ENCODE measurements at regions of chr11 and their contacts with region 1.

Region 1: DNA sequence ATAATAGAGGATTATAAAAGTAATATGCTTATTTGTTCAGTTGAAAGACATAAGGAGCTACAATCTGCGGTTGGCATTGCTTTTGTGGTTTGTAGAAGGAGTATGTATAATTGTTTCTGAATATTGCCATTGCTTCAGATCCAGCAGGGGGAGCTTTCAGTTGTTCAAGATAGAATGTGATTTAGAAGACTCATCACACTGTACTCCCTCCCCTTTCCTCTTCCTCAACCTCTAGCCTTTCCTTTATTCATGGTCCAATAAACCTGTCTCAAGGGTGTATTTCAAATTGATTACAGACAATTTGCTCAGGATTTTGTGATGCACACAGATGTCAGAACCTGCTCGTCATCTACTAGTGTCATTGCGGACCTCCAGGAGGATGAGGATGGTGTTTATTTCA is 9.8 kb downstream of the PRMT3 start:
- DNase-seq: peak; percentile 34
- ATAC-seq: peak; percentile 83
- H3K4me3 Mint-ChIP-seq: no peak overlapping the region
- H3K27ac Mint-ChIP-seq: peak overlapping the region; percentile 5
- H3K4me1 Mint-ChIP-seq: peaks cover 8% of the 10 kb centered on the region
- H3K27me3 Mint-ChIP-seq: no peaks in the 10 kb centered on the region

Region 2: DNA sequence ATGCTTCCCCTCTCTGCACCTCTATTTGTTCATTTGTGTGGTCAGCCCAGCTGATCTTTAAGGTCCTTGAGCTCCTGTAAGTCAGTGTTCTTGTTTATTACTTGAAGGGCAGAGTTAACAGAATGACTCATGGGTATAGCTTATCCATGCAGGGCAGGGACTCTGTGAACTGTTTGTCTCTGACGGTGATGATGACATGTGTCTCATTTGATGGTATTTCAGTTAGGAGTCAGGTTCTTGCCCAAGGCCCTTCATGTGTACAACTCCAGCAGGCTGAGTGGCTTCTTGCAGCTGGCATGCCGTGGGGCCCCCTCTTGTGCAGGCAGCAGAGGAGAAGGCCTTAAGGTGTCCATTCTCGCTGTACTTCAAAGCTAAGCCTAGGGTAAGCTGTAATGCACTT is 402.1 kb before region 1 on chr11:
- CTCF ChIA-PET with region 1: no interaction called
- POLR2A ChIA-PET with region 1: no interaction called
- intact Hi-C with region 1: no loop called
- DNase-seq: no peak
- ATAC-seq: no peak
- H3K4me3 Mint-ChIP-seq: no peak overlapping the region
- H3K27ac Mint-ChIP-seq: no peak overlapping the region
- H3K4me1 Mint-ChIP-seq: no peaks in the 10 kb centered on the region
- H3K27me3 Mint-ChIP-seq: peaks cover 3% of the 10 kb centered on the region

Region 3: DNA sequence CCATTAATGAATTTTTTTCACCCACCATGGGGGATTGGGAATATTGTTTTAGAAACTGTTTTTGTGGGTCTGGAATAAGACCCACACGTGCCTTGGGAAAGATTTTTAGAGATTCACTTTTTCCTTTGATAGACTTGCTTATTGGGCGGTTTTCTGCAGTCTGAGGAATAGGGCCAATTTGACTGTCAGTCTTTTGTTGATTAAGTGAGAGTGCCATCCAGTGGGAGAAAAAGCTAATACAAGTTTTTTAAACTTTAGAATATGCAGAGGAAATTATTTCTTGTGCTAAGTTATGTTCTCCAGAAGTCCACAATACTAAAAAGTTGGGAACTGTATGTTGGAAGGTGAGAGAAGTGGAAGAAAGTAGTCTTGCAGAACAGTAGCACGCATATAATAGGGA is 46.3 kb after region 1 on chr11:
- CTCF ChIA-PET with region 1: interaction called, 3 read pairs
- POLR2A ChIA-PET with region 1: no interaction called
- intact Hi-C with region 1: loop called in 1 of 2 experiments (anchors 2 kb)
- DNase-seq: no peak
- ATAC-seq: no peak
- H3K4me3 Mint-ChIP-seq: no peak overlapping the region
- H3K27ac Mint-ChIP-seq: no peak overlapping the region
- H3K4me1 Mint-ChIP-seq: no peaks in the 10 kb centered on the region
- H3K27me3 Mint-ChIP-seq: no peaks in the 10 kb centered on the region

Region 4: GRCh38 chr11:20609727-20610707 is 212.7 kb after region 1 on chr11:
- CTCF ChIA-PET with region 1: interaction called, 22 read pairs
- POLR2A ChIA-PET with region 1: interaction called, 3 read pairs
- intact Hi-C with region 1: loop called (anchors 1 to 5 kb)
- DNase-seq: peak; percentile 81
- ATAC-seq: peak; percentile 86
- H3K4me3 Mint-ChIP-seq: no peak overlapping the region
- H3K27ac Mint-ChIP-seq: no peak overlapping the region
- H3K4me1 Mint-ChIP-seq: peaks cover 7% of the 10 kb centered on the region
- H3K27me3 Mint-ChIP-seq: peaks cover 62% of the 10 kb centered on the region